Activated CD4-positive, alpha-beta T cell treated with anti-CD3 and anti-CD28 coated beads, Interleukin-2, amount 10 ng/mL, durations not matched to agents 24 days and 14 days (primary cell): ENCODE measurements at regions of chr18 and their contacts with region 1.

Region 1: GRCh38 chr18:74291771-74292540 is at the start of gene CYB5A:
- DNase-seq: peak; percentile 99
- H3K4me3 Mint-ChIP-seq: no peak within 1 kb of the TSS
- H3K27ac Mint-ChIP-seq: peak within 1 kb of the TSS; percentile 88
- H3K4me1 Mint-ChIP-seq: peaks cover 9% of the 10 kb centered on the region
- H3K27me3 Mint-ChIP-seq: peaks cover 13% of the 10 kb centered on the region
- total RNA-seq, gene CYB5A: 34.8 and 40.7 TPM in 2 replicates

Region 2: GRCh38 chr18:73733806-73734314 is 558.1 kb before region 1 on chr18:
- intact Hi-C with region 1: no loop called
- DNase-seq: no peak
- H3K4me3 Mint-ChIP-seq: no peak overlapping the region
- H3K27ac Mint-ChIP-seq: no peak overlapping the region
- H3K4me1 Mint-ChIP-seq: no peaks in the 10 kb centered on the region
- H3K27me3 Mint-ChIP-seq: no peaks in the 10 kb centered on the region

Region 3: DNA sequence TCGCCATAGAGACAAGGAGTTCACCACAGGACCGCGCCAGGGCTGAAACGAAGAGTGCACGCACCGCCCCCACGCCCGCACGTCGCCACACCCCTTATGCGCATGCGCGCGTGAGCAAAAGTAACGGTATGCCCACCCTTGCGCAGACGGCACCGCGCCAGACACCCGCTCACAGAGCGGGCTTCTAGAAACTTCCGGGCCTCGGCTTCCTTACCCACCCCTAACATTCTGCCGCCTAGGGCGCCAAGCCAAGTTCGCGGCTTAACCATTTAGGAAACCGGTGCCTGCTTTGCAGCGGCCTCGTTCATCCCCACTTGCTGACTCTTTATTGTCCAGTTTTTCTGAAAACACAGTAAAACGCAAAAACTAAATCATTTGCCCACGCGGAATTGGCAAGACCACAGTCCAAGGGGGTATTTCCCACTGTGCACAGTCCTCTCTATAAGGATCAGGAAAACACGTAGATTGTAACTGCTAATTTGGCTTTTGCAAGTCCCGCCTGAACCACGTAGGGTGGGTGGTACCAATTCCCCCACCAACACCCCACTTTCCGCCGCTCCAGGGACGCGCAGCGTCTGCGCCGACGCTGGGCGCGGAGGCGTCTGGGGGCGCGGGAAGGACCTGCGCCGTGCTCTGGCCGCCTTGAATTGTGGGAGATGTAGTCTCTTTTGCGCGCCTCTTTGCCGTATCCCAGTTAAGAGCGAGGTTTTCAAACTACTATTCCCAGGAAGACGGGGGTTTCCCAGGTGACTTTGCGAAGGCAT is 144.0 kb before region 1 on chr18 and contains the starts of genes FBXO15 and TIMM21:
- intact Hi-C with region 1: loop called (anchors 1 kb)
- DNase-seq: peak; percentile 99
- H3K4me3 Mint-ChIP-seq: peak within 1 kb of the TSS; percentile 98
- H3K27ac Mint-ChIP-seq: peak within 1 kb of the TSS; percentile 97
- H3K4me1 Mint-ChIP-seq: peaks cover 50% of the 10 kb centered on the region
- H3K27me3 Mint-ChIP-seq: peaks cover 5% of the 10 kb centered on the region
- total RNA-seq, gene FBXO15: 1.2 and 1.3 TPM in 2 replicates
- total RNA-seq, gene TIMM21: 61.8 and 71.8 TPM in 2 replicates

Region 4: GRCh38 chr18:74196220-74197119 is 95.5 kb before region 1 on chr18:
- intact Hi-C with region 1: loop called (anchors 5 kb)
- DNase-seq: peak; percentile 82
- H3K4me3 Mint-ChIP-seq: peak overlapping the region; percentile 81
- H3K27ac Mint-ChIP-seq: peak overlapping the region; percentile 11
- H3K4me1 Mint-ChIP-seq: peaks cover 2% of the 10 kb centered on the region
- H3K27me3 Mint-ChIP-seq: peaks cover 2% of the 10 kb centered on the region

Region 5: GRCh38 chr18:74249181-74249968 is 42.6 kb before region 1 on chr18:
- intact Hi-C with region 1: loop called (anchors 5 kb)
- DNase-seq: no peak
- H3K4me3 Mint-ChIP-seq: no peak overlapping the region
- H3K27ac Mint-ChIP-seq: no peak overlapping the region
- H3K4me1 Mint-ChIP-seq: peaks cover 24% of the 10 kb centered on the region
- H3K27me3 Mint-ChIP-seq: no peaks in the 10 kb centered on the region

Region 6: GRCh38 chr18:74278058-74278457 is 13.9 kb before region 1 on chr18:
- intact Hi-C with region 1: no loop called
- DNase-seq: no peak
- H3K4me3 Mint-ChIP-seq: no peak overlapping the region
- H3K27ac Mint-ChIP-seq: no peak overlapping the region
- H3K4me1 Mint-ChIP-seq: peaks cover 13% of the 10 kb centered on the region
- H3K27me3 Mint-ChIP-seq: no peaks in the 10 kb centered on the region

Region 7: GRCh38 chr18:74389171-74389927 is 97.4 kb after region 1 on chr18:
- intact Hi-C with region 1: no loop called
- DNase-seq: no peak
- H3K4me3 Mint-ChIP-seq: no peak overlapping the region
- H3K27ac Mint-ChIP-seq: no peak overlapping the region
- H3K4me1 Mint-ChIP-seq: peaks cover 17% of the 10 kb centered on the region
- H3K27me3 Mint-ChIP-seq: peaks cover 26% of the 10 kb centered on the region